Colonic mucosa (tissue), 4 donors: ENCODE measurements at regions of chr1 and their contacts with region 1.

Region 1: DNA sequence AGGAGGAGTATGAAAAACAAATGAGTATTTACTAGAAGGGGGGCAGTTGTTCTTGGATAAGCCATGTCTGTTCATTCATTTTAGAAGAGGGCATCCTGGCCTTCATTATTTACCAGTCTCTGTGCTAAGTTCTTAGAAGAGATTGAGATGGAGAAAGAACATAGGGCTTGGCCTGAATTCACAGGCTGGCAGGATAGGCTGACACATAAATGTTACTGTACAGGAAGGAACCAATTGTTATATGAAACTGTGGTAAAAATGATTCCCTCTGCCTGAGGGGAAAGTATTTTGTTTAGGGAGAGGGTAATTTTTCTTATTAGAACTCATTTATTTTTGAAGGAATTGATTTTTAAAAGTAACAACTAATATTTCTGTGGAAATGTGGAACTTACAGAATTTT is 99.5 kb downstream of the MAN1A2 start:
- DNase-seq: no peak
- H3K4me3 ChIP-seq: no peak overlapping the region
- H3K27ac ChIP-seq: no peak overlapping the region
- H3K4me1 ChIP-seq: no peaks in the 10 kb centered on the region
- H3K27me3 ChIP-seq: no peaks in the 10 kb centered on the region
- CTCF ChIP-seq: no peak

Region 2: GRCh38 chr1:117036018-117036461 is 430.7 kb before region 1 on chr1:
- intact Hi-C with region 1: no loop called
- DNase-seq: no peak
- H3K4me3 ChIP-seq: no peak overlapping the region
- H3K27ac ChIP-seq: no peak overlapping the region
- H3K4me1 ChIP-seq: no peaks in the 10 kb centered on the region
- H3K27me3 ChIP-seq: no peaks in the 10 kb centered on the region
- CTCF ChIP-seq: no peak

Region 3: GRCh38 chr1:117392771-117393170 is 74.0 kb before region 1 on chr1:
- intact Hi-C with region 1: loop called (anchors 10 kb)
- DNase-seq: no peak
- H3K4me3 ChIP-seq: no peak overlapping the region
- H3K27ac ChIP-seq: no peak overlapping the region
- H3K4me1 ChIP-seq: no peaks in the 10 kb centered on the region
- H3K27me3 ChIP-seq: no peaks in the 10 kb centered on the region
- CTCF ChIP-seq: no peak

Region 4: GRCh38 chr1:117501281-117501680 is 34.5 kb after region 1 on chr1:
- intact Hi-C with region 1: no loop called
- DNase-seq: no peak
- H3K4me3 ChIP-seq: no peak overlapping the region
- H3K27ac ChIP-seq: no peak overlapping the region
- H3K4me1 ChIP-seq: no peaks in the 10 kb centered on the region
- H3K27me3 ChIP-seq: no peaks in the 10 kb centered on the region
- CTCF ChIP-seq: no peak